ENCODE measurements at regions of chr3 and their contacts with region 1.

Region 1: DNA sequence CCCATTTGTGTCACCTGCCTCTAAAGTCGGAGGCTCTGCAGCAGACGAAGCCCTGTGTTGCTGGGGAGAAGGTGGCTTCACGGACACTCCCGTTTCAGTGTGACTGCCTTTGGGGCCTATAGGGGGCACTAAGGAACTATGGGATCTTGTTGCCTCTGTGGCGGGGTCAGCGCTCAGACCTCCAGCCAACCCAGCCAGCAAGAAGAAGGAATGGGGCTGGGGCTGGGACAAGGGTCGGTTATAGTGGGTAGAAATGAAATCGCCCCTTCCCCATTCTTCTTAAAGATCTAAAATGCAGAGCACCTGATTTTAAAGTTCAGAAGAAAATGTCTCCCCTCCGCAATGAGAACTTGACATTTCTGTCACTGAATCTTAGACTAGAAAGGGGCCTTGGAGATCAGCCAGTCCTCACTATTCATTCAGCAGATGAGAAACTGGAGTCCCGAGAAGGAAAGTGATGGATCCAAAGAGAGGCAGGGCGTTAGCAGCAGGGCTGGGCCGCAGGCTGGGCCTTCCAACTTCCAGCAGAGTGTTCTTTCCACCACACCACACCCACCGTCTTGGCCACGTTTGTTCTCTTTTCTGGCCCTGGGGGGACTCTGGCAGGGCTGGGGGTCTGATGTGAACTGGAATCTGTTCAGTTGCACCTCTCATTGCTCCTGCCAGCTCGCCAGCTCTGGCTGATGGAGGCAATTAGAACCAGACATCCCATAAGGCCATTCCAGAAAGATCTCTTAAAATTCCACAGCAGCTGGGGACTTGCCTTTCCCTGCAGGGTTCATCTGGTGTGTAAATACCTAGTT is 195.4 kb downstream of the OPA1 start:
- DNase-seq: peak; percentile 59 to 70 (median 68)
- H3K4me3 ChIP-seq: no peak overlapping the region
- H3K27ac ChIP-seq: no peak overlapping the region
- H3K4me1 ChIP-seq: peaks cover 0 to 7% (median 3%) of the 10 kb centered on the region in 4 experiments
- H3K27me3 ChIP-seq: peaks cover 0 to 29% (median 4%) of the 10 kb centered on the region in 5 experiments

Region 2: GRCh38 chr3:193530231-193531165 is 257.9 kb before region 1 on chr3:
- CTCF ChIA-PET with region 1: no interaction called
- POLR2A ChIA-PET with region 1: no interaction called
- DNase-seq: no peak
- H3K4me3 ChIP-seq: no peak overlapping the region
- H3K27ac ChIP-seq: no peak overlapping the region
- H3K4me1 ChIP-seq: no peaks in the 10 kb centered on the region
- H3K27me3 ChIP-seq: peaks cover 0 to 3% (median 0%) of the 10 kb centered on the region in 5 experiments

Region 3: GRCh38 chr3:193800138-193801043 is 12.0 kb after region 1 on chr3:
- CTCF ChIA-PET with region 1: interaction called, 11 read pairs
- POLR2A ChIA-PET with region 1: no interaction called
- DNase-seq: peak; percentile 69 to 92 (median 80)
- H3K4me3 ChIP-seq: no peak overlapping the region
- H3K27ac ChIP-seq: peak overlapping the region in 1 of 2 experiments; percentile 14
- H3K4me1 ChIP-seq: peaks cover 5 to 28% (median 10%) of the 10 kb centered on the region in 4 experiments
- H3K27me3 ChIP-seq: no peaks in the 10 kb centered on the region